Calu3 (cell line): ENCODE measurements at regions of chr1 and their contacts with region 1.

Region 1: GRCh38 chr1:182588500-182589452 is at the start of gene RNASEL:
- DNase-seq: peak; percentile 81
- H3K4me3 Mint-ChIP-seq: peak within 1 kb of the TSS; percentile 90
- H3K27ac Mint-ChIP-seq: peak within 1 kb of the TSS; percentile 95
- H3K4me1 Mint-ChIP-seq: no peaks in the 10 kb centered on the region
- H3K27me3 Mint-ChIP-seq: peaks cover 25% of the 10 kb centered on the region
- CTCF ChIP-seq: no peak
- total RNA-seq, gene RNASEL: 7.0 and 10.0 TPM in 2 replicates

Region 2: DNA sequence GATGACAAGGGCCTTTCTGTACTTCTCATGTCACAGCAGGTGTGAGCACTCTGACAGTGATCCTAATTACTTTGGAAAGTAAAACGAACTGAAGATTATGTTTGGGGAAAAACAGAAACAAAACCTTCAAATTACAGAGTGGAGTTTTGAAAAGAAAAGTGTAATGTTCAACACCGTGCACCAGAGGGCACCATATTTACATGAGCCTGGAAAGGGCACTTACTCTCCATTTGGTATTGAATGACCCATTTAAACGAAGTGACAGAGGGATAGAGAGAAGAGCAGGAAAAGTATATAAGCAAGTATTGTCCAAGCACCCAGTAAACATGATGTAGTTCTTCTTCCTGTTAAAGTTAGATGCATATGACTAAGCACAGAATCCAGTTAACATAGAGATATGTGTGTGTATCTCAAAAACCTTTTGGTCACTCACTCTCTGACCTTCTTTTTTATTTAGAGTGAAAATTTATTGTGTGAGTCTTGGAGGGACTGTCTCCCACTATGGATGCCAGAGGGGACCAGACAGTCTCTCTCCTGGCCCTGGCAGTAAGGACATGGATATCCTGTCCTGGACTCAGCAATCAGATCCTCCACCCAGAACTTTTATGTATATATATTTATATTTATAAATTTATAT is 142.6 kb before region 1 on chr1:
- CTCF ChIA-PET with region 1: no interaction called
- intact Hi-C with region 1: loop called (anchors 2 kb)
- DNase-seq: peak; percentile 60
- H3K4me3 Mint-ChIP-seq: no peak overlapping the region
- H3K27ac Mint-ChIP-seq: no peak overlapping the region
- H3K4me1 Mint-ChIP-seq: no peaks in the 10 kb centered on the region
- H3K27me3 Mint-ChIP-seq: peaks cover 40% of the 10 kb centered on the region
- CTCF ChIP-seq: peak; percentile 55